ENCODE measurements at regions of chr12 and their contacts with region 1.

Region 1: GRCh38 chr12:6927379-6928024 is at the start of gene ATN1:
- DNase-seq: peak; percentile 61
- ATAC-seq: peak; percentile 45
- H3K4me3 Mint-ChIP-seq: peak within 1 kb of the TSS; percentile 82
- H3K27ac Mint-ChIP-seq: peak within 1 kb of the TSS; percentile 89
- H3K4me1 Mint-ChIP-seq: peaks cover 60% of the 10 kb centered on the region
- H3K27me3 Mint-ChIP-seq: no peaks in the 10 kb centered on the region
- total RNA-seq, gene ATN1: 38.3 to 40.1 TPM

Region 2: DNA sequence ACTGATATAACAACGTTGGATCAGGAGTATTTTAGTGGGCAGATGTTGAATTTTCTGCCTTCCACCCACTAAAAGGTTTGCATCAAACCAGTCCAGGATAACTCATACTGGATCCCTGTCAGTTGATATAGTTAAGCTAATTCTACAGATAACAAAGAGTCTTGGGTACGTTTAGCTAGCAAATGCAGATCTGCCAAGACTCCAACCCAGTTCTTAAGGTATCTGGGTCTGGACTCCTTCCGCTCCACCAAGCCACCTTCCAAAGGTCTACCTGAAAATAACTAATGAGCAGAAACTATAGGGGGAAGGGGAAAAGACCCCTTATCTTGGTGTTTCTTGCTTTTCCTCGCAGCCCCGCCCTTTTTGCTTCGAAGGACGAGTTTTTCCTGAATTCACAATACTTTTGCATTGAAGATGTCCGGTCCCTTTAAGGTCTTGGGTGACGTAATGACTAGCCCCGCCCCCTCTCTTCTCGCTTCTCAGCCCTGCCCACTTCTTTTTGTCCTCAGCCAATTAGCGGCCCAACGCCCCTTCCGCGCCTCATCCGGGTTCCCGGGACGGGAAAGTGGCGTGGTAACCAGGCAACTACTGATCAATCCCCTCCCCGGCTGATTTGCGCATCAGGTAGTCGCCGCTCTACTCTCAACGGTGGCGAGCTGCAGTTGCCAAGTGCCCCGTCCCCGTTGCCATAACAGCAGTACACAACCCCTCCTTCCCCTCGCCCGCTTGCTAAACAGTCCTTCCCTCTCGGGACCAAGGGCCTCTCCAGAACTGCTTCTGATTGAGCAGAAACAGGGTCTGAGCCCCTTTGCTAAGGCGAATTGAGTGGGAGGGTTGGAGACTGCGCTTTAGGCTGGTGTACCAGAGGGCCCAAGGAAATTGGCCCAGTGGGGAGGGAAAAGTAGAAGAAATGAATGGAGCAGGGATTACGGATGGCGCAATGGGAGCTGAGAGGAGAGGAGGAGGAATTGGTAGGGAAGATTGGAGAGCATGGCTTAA is 22.9 kb before region 1 on chr12 and contains the start of gene LRRC23:
- CTCF ChIA-PET with region 1: interaction called, 33 read pairs
- DNase-seq: peak; percentile 99
- ATAC-seq: peak; percentile 98
- H3K4me3 Mint-ChIP-seq: no peak within 1 kb of the TSS
- H3K27ac Mint-ChIP-seq: no peak within 1 kb of the TSS
- H3K4me1 Mint-ChIP-seq: peaks cover 3% of the 10 kb centered on the region
- H3K27me3 Mint-ChIP-seq: no peaks in the 10 kb centered on the region
- total RNA-seq, gene LRRC23: 4.9 to 8.7 TPM

Region 3: DNA sequence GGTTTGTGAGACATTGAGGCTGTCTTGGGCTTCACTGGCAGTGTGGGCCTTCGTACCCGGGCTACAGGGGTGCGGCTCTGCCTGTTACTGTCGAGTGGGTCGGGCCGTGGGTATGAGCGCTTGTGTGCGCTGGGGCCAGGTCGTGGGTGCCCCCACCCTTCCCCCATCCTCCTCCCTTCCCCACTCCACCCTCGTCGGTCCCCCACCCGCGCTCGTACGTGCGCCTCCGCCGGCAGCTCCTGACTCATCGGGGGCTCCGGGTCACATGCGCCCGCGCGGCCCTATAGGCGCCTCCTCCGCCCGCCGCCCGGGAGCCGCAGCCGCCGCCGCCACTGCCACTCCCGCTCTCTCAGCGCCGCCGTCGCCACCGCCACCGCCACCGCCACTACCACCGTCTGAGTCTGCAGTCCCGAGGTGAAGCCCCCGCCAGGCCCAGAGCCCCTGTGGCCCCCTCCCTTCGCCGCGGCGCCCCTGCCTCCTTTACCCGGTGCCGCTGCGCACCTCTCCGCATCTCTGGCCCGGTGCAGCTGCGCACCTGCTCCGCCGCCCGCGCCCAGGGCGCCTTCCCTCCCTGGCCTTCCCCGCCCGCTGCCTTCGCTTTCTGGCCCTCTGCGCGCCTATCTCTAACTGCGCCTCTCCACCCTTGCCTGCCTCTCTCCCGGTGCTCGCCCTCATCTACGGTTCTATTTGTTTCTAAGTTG is 13.1 kb before region 1 on chr12 and contains the start of gene ENO2:
- CTCF ChIA-PET with region 1: interaction called, 33 read pairs
- DNase-seq: peak; percentile 89
- ATAC-seq: peak; percentile 96
- H3K4me3 Mint-ChIP-seq: peak within 1 kb of the TSS; percentile 92
- H3K27ac Mint-ChIP-seq: peak within 1 kb of the TSS; percentile 86
- H3K4me1 Mint-ChIP-seq: peaks cover 45% of the 10 kb centered on the region
- H3K27me3 Mint-ChIP-seq: no peaks in the 10 kb centered on the region
- total RNA-seq, gene ENO2: 106 to 171 TPM

Region 4: GRCh38 chr12:6937481-6938297 is 10.2 kb after region 1 on chr12:
- CTCF ChIA-PET with region 1: interaction called, 116 read pairs
- DNase-seq: peak; percentile 97
- ATAC-seq: peak; percentile 94
- H3K4me3 Mint-ChIP-seq: peak overlapping the region; percentile 87
- H3K27ac Mint-ChIP-seq: peak overlapping the region; percentile 96
- H3K4me1 Mint-ChIP-seq: peaks cover 45% of the 10 kb centered on the region
- H3K27me3 Mint-ChIP-seq: no peaks in the 10 kb centered on the region

Region 5: DNA sequence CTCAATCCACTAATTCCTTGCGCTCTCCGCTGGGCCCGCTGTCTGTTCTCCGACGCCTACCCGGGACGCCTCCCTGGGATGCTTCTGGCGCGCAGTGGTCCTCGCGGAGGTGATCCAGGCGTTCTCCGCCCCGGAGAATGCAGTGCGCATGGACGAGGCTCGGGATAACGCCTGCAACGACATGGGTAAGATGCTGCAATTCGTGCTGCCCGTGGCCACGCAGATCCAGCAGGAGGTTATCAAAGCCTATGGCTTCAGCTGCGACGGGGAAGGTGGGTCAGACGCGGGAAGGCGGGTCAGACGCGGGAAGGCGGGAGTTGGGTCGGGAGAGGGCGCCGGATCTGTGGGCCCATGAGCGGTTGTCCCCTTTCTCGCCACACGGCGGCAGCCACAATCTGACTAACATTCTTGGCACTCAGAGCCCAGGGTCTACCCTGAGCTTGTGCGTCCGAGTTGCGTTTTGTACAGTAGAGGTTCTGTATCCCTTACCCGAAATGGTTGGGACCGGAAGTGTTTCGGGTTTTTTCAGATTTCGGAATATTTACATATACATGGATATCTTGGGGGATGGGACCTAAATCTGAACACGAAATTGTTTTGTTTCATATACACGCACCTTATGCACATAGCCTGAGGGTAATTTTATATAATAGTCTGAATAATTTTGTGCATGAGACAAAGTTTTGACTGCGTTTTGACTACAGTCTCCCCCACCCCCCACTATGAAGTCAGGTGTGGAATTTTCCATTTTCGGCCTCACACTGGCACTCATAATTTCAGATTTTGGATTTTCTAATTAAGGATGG is 17.1 kb after region 1 on chr12:
- CTCF ChIA-PET with region 1: interaction called, 116 read pairs
- DNase-seq: peak; percentile 95
- ATAC-seq: peak; percentile 50
- H3K4me3 Mint-ChIP-seq: peak overlapping the region; percentile 86
- H3K27ac Mint-ChIP-seq: peak overlapping the region; percentile 98
- H3K4me1 Mint-ChIP-seq: peaks cover 61% of the 10 kb centered on the region
- H3K27me3 Mint-ChIP-seq: peaks cover 4% of the 10 kb centered on the region

Region 6: DNA sequence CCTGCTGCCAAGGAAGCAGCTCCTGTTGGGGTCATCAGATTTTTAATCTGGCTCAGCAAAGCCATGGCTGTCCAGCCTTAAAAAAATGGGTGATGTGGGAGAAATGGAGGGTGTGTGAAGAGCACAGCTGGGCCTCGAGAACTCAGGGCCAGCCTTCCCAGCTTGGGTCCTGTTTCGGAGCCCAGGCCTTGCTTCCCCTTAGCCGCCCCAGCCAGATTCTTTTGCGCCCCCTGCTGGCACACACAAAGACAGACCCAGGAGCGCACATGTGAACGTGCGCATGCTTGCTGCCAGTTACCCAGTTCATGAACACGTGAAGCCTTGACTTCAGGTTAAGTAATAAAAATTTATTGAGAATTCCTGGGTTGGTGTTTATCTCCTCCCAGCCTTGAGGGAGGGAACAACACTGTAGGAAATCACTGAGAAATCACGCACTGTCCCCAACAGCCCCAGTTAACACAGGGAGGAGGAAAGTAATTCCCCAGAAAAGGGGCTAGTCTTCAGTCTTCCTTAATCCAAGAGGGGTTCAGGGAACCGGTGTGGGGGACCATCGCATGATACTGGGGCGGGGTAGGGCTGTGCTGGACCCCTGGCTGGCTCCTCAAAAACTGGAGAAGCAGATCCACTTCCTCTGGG is 37.6 kb after region 1 on chr12:
- CTCF ChIA-PET with region 1: interaction called, 57 read pairs
- DNase-seq: peak; percentile 91
- ATAC-seq: peak; percentile 58
- H3K4me3 Mint-ChIP-seq: no peak overlapping the region
- H3K27ac Mint-ChIP-seq: peak overlapping the region; percentile 82
- H3K4me1 Mint-ChIP-seq: peaks cover 61% of the 10 kb centered on the region
- H3K27me3 Mint-ChIP-seq: no peaks in the 10 kb centered on the region